Heart right ventricle (tissue), 16 donors: ENCODE measurements at regions of chr1 and their contacts with region 1.

Region 1: GRCh38 chr1:94079080-94079940 is 41.6 kb downstream of the ABCA4 start:
- DNase-seq: no peak
- ATAC-seq: no peak
- H3K4me3 ChIP-seq: no peak overlapping the region
- H3K27ac ChIP-seq: peak overlapping the region in 1 of 10 donors; percentile 26
- H3K4me1 ChIP-seq: peaks cover 0 to 4% (median 0%) of the 10 kb centered on the region in 9 donors
- H3K27me3 ChIP-seq: peaks cover 0 to 15% (median 0%) of the 10 kb centered on the region in 7 donors
- CTCF ChIP-seq: no peak

Region 2: GRCh38 chr1:94142022-94142421 is 62.7 kb after region 1 on chr1:
- intact Hi-C with region 1: loop called in 1 of 10 experiments (anchors 10 kb)
- DNase-seq: no peak
- ATAC-seq: peak in 6 of 8 donors; percentile 46 to 81 (median 59)
- H3K4me3 ChIP-seq: no peak overlapping the region
- H3K27ac ChIP-seq: peak overlapping the region in 5 of 10 donors; percentile 0 to 61 (median 43)
- H3K4me1 ChIP-seq: peaks cover 0 to 15% (median 5%) of the 10 kb centered on the region in 9 donors
- H3K27me3 ChIP-seq: no peaks in the 10 kb centered on the region
- CTCF ChIP-seq: no peak